Activated CD8-positive, alpha-beta T cell treated with anti-CD3 and anti-CD28 coated beads for 36 hours (primary cell): ENCODE measurements at regions of chr10 and their contacts with region 1.

Region 1: DNA sequence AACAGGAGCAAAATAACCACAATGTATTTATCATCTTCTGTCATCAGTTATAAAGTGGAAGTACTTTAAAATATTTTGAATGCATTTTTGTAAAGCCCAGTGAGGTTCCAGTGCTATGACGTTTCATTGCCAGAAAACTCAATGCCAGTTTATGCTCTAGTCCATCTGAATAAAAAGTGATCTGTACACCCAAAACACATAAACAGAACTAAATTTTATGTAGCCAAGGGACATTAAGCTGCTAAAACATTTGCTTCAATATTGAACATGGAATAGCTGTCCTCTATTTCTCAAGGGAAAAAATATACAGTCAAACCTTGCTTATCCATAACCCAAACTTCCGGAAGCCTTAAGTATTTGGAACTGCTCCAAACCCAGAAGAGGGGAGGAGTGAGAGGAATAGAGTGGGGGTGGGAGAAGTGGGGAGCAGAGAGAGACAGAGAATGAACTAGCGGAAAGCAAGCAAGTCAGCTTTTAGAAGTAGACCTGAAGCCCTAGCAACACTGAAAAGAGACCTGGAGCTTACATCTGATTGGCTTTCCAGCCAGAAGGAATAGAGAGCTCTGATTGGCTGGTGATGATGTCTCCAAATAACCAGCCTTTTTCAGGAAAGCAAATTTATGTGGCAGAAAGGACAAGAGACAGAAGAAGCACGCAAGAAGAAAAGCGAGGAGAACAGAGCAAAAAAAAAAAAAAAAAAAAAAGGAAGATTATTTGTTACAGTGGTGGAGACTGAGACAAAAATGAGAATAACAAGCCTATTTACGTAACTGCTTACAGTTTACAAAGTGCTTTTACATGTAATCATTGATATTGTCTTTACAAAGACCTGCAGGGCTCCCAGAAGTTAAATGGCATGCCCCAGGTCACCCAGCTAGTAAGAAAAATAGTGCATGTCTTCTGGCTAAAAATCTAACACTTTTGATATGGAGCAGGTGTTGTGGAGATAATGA is 196.0 kb downstream of the RNLS start:
- DNase-seq: no peak
- ATAC-seq: peak; percentile 34
- H3K4me3 Mint-ChIP-seq: no peak overlapping the region
- H3K27ac Mint-ChIP-seq: no peak overlapping the region
- H3K4me1 Mint-ChIP-seq: peaks cover 29% of the 10 kb centered on the region
- H3K27me3 Mint-ChIP-seq: no peaks in the 10 kb centered on the region
- CTCF ChIP-seq: no peak

Region 2: GRCh38 chr10:87861953-87862678 is 525.0 kb before region 1 on chr10:
- CTCF ChIA-PET with region 1: interaction called, 63 read pairs
- POLR2A ChIA-PET with region 1: interaction called, 4 read pairs
- intact Hi-C with region 1: loop called (anchors 5 kb)
- DNase-seq: peak; percentile 95
- ATAC-seq: peak; percentile 63
- H3K4me3 Mint-ChIP-seq: peak overlapping the region; percentile 87
- H3K27ac Mint-ChIP-seq: peak overlapping the region; percentile 95
- H3K4me1 Mint-ChIP-seq: peaks cover 22% of the 10 kb centered on the region
- H3K27me3 Mint-ChIP-seq: no peaks in the 10 kb centered on the region
- CTCF ChIP-seq: no peak

Region 3: GRCh38 chr10:88270871-88271713 is 116.0 kb before region 1 on chr10:
- CTCF ChIA-PET with region 1: interaction called, 7 read pairs
- POLR2A ChIA-PET with region 1: no interaction called
- intact Hi-C with region 1: loop called (anchors 5 kb)
- DNase-seq: peak; percentile 79
- ATAC-seq: peak; percentile 91
- H3K4me3 Mint-ChIP-seq: peak overlapping the region; percentile 53
- H3K27ac Mint-ChIP-seq: peak overlapping the region; percentile 90
- H3K4me1 Mint-ChIP-seq: peaks cover 46% of the 10 kb centered on the region
- H3K27me3 Mint-ChIP-seq: peaks cover 5% of the 10 kb centered on the region
- CTCF ChIP-seq: no peak

Region 4: DNA sequence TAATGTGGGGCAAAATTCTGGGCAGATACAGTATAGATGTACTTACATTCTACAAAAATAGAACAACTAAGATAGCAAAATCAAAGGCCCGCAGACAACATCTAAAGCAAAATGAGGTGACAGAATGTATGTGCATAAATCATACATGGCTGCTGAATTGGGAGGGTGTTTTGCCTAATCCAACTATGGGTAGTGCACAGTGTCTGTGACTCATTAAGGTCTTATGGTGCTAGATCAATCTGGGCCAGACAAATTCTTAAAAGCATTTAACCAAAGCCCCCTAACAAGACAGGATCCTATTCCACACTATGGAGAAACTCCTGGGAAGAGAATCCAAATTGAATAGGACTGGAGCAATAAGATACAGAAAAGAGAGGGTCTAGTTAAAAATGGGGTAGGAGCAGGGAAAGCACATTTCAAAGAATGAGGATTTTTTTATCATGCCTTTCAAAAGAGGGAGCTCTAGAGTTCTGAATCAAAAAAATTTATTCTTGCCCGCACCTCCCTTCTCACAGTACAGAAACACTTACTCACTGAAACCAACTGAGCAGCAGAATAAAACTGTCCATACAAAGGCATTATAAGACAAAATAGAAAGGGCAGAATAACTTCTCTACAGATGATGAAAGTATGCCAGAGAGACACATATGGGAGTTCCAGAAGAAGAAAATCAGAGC is 14.7 kb after region 1 on chr10:
- CTCF ChIA-PET with region 1: interaction called, 22 read pairs
- POLR2A ChIA-PET with region 1: no interaction called
- intact Hi-C with region 1: no loop called
- DNase-seq: no peak
- ATAC-seq: peak; percentile 64
- H3K4me3 Mint-ChIP-seq: no peak overlapping the region
- H3K27ac Mint-ChIP-seq: no peak overlapping the region
- H3K4me1 Mint-ChIP-seq: peaks cover 13% of the 10 kb centered on the region
- H3K27me3 Mint-ChIP-seq: no peaks in the 10 kb centered on the region
- CTCF ChIP-seq: peak; percentile 39

Region 5: DNA sequence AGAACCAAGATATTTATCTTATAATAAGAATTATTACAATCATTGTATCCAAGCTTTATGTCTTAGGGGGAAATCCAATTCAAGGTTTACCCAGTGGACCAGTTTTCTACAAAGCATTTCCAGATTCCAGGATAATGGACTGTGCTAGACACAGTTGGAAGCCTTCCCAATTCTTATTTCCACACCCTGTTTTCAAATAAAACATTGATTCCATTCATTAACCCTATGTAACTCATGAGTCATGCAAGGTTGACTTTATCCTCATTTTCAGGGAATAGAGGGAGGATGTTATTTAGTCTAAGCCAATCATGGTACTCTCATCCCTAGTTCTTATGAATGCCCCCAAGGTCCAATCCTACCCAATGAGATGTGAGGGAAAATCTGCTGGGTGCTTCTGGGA is 50.3 kb after region 1 on chr10:
- CTCF ChIA-PET with region 1: no interaction called
- POLR2A ChIA-PET with region 1: no interaction called
- intact Hi-C with region 1: no loop called
- DNase-seq: no peak
- ATAC-seq: no peak
- H3K4me3 Mint-ChIP-seq: no peak overlapping the region
- H3K27ac Mint-ChIP-seq: no peak overlapping the region
- H3K4me1 Mint-ChIP-seq: no peaks in the 10 kb centered on the region
- H3K27me3 Mint-ChIP-seq: no peaks in the 10 kb centered on the region
- CTCF ChIP-seq: no peak

Region 6: GRCh38 chr10:88800152-88801125 is 413.3 kb after region 1 on chr10:
- CTCF ChIA-PET with region 1: no interaction called
- POLR2A ChIA-PET with region 1: no interaction called
- intact Hi-C with region 1: loop called (anchors 5 kb)
- DNase-seq: peak; percentile 61
- ATAC-seq: peak; percentile 90
- H3K4me3 Mint-ChIP-seq: no peak overlapping the region
- H3K27ac Mint-ChIP-seq: peak overlapping the region; percentile 24
- H3K4me1 Mint-ChIP-seq: peaks cover 13% of the 10 kb centered on the region
- H3K27me3 Mint-ChIP-seq: peaks cover 9% of the 10 kb centered on the region
- CTCF ChIP-seq: no peak